ENCODE measurements at regions of chr15 and their contacts with region 1.

Region 1: DNA sequence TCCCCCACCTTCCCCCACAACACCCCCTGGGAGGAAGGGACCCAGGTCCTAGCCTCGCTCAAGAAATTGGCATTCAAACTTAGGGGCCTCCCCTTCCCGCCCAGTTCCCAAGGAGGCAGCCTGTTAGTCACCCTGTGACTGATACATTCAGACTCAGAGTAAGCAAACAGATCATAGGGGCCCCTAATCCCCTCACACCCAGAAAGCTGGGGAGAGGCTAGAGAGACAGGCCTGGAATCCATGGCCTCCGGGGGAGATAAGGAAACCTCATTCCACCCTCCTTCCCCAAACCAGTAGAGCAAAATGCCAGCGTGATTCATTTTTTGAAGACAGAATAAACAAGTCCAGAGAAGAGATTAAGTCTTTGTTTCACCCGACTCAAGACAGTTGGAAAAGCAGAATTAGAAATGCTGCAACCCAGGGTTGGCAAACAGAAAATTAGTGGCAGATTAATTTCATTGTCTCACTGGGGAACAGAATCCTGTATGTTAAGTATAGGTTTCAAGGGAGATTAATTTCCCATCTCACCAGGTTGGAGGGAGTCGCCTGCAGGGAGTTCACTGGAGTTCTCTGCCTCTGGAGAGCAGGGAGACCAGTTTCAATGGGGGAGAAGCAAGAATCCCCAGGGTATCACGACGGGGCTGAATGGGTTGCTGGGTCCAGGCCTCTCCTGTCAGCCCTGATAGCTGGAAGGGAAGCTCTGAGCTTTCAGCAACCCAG is 268.3 kb downstream of the UACA start:
- DNase-seq: peak; percentile 94 to 97
- H3K4me3 ChIP-seq: peak overlapping the region; percentile 17; the same call in 1 of the 2 replicates
- H3K4me3 Mint-ChIP-seq: peak overlapping the region; percentile 68
- H3K27ac Mint-ChIP-seq: peak overlapping the region; percentile 98
- H3K4me1 ChIP-seq: peaks cover 41% of the 10 kb centered on the region
- H3K4me1 Mint-ChIP-seq: peaks cover 56% of the 10 kb centered on the region
- H3K27me3 ChIP-seq: no peaks in the 10 kb centered on the region
- H3K27me3 Mint-ChIP-seq: no peaks in the 10 kb centered on the region
- CTCF ChIP-seq: no peak

Region 2: DNA sequence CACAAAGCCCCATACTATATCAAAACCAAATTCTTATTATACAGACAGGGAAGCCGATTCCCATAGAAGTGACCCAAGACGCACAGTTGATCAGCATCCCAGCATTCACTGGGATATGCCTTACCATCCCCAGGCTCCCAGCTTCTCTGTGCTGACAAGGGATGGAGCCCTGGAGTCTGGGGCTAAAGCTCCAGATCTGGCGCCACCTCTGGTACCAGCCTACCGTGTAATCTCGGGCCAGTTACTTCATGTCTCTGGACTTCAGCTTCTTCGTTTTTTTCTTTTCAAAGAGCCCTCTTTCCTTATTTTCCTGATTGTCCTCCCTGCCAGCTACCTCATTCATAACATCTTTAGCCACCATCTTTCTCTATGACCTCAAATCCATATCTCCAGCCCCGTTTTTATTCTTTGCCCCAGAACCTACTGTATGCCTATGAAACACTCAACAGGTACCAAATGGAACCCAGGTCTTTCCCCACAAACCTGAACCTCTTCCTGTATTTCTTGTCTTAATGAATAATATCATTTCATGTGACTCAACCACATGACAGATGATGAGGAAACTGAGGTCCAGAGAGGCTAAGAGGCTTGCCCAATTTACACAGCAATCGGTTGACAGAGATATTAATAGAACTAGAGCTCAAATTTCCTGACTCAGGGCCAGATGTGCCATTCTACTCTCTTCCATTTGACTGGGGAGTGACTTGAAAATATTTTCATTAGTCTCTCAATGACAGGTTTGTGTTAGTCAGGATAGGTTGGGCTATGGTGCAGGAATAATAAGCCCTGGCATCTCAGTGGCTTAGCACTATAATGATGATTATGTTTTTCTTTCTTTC is 311.9 kb before region 1 on chr15:
- CTCF ChIA-PET with region 1: no interaction called
- POLR2A ChIA-PET with region 1: no interaction called
- intact Hi-C with region 1: no loop called
- DNase-seq: no peak
- H3K4me3 ChIP-seq: no peak overlapping the region
- H3K4me3 Mint-ChIP-seq: no peak overlapping the region
- H3K27ac Mint-ChIP-seq: no peak overlapping the region
- H3K4me1 ChIP-seq: peaks cover 6% of the 10 kb centered on the region
- H3K4me1 Mint-ChIP-seq: peaks cover 8% of the 10 kb centered on the region
- H3K27me3 ChIP-seq: no peaks in the 10 kb centered on the region
- H3K27me3 Mint-ChIP-seq: no peaks in the 10 kb centered on the region
- CTCF ChIP-seq: no peak

Region 3: DNA sequence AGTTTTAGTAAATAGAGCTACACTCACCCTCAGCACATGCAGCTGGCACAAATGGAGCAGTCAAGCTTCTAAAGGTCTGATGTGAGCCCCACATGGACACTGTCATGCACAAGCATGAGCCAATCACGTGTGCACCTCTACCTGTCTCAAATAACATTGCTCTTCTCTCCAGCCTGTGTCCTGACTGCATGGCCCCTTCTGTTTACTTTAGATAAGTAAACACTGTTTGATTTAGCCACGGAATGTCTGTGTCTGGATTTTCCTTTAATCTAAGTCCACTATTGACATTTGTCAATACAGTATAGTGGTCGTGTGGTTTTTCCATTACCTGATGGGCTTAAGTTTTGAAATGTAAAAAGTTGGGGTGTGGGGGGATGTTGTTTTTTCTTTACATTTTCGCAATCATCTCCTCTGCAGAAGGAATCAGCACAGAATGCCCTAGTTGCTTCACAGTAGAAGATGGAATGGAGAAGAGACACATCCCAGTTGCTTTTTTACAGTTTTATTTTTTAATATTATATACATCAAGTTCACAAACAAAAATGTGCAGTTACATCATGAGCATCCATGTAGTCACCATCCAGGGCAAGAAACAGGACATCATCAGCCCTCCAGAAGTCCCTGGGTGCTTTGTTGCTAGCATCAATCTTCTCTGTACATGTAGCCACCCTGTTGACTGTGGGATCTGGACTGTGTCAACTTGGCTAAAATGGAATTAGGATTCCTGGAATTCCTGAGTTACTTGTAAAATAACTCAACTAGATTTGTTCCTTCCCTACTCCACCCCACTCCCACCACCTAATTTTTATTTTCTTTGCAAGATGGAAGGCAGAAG is 122.3 kb after region 1 on chr15:
- CTCF ChIA-PET with region 1: no interaction called
- POLR2A ChIA-PET with region 1: no interaction called
- intact Hi-C with region 1: loop called (anchors 1 kb)
- DNase-seq: peak; percentile 75 to 81
- H3K4me3 ChIP-seq: no peak overlapping the region
- H3K4me3 Mint-ChIP-seq: peak overlapping the region; percentile 65
- H3K27ac Mint-ChIP-seq: peak overlapping the region; percentile 91
- H3K4me1 ChIP-seq: peaks cover 27% of the 10 kb centered on the region
- H3K4me1 Mint-ChIP-seq: peaks cover 25% of the 10 kb centered on the region
- H3K27me3 ChIP-seq: no peaks in the 10 kb centered on the region
- H3K27me3 Mint-ChIP-seq: no peaks in the 10 kb centered on the region
- CTCF ChIP-seq: no peak

Measured in Caco-2 (cell line).